Common myeloid progenitor, CD34-positive (primary cell): ENCODE measurements at regions of chr1 and their contacts with region 1.

Region 1: GRCh38 chr1:1122078-1122811 is 6.4 kb upstream of the C1orf159 start:
- DNase-seq: peak; percentile 68 to 79 (median 72)
- H3K4me3 ChIP-seq: peak overlapping the region in 2 of 7 experiments; percentile 48 to 63
- H3K27ac ChIP-seq: no peak overlapping the region
- H3K4me1 ChIP-seq: peaks cover 0 to 23% (median 13%) of the 10 kb centered on the region in 4 experiments
- H3K27me3 ChIP-seq: peaks cover 0 to 27% (median 3%) of the 10 kb centered on the region in 5 experiments

Region 2: DNA sequence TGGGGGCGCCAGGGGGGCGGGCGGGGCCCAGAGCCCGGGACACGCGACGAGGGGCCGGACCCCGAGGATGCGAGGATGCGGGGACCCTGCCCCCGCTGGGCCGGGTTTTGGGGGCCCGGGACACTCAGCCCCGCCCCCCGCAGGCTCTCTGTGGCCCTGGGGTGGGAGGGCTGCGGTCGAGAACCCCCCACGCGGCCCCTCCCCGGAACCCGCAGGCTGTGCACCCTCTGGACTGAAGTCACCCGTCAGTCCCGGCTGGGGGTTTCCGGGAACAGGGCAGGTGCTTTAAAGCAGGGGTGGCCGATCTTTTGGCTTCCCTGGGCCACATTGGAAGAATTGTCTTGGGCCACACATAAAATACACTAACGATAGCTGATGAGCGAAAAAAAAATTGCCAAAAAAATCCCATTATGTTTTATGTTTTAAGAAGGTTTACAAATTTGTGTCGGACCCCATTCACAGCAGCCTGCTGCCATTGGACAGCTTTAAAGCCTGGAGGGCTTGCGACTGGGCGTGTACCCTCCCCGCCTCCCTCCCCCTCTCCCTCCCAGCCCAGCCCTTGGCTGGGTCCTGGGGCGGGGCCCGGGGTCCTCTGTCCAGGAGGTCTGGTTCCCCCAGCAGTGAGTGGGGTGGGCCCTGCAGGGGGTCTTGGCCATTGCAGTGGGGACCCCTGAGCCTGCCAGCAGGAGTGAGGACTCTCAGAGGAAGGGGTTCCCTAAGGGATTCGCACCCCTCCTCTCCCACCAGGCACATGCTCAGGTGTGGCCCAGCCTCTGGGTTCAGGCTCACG is 15.2 kb after region 1 on chr1:
- CTCF ChIA-PET with region 1: interaction called, 13 read pairs
- POLR2A ChIA-PET with region 1: no interaction called
- DNase-seq: peak; percentile 61 to 88 (median 88)
- H3K4me3 ChIP-seq: peak overlapping the region in 3 of 7 experiments; percentile 39 to 62 (median 43)
- H3K27ac ChIP-seq: peak overlapping the region in 1 of 2 experiments; percentile 25
- H3K4me1 ChIP-seq: peaks cover 0 to 29% (median 24%) of the 10 kb centered on the region in 4 experiments
- H3K27me3 ChIP-seq: no peaks in the 10 kb centered on the region

Region 3: DNA sequence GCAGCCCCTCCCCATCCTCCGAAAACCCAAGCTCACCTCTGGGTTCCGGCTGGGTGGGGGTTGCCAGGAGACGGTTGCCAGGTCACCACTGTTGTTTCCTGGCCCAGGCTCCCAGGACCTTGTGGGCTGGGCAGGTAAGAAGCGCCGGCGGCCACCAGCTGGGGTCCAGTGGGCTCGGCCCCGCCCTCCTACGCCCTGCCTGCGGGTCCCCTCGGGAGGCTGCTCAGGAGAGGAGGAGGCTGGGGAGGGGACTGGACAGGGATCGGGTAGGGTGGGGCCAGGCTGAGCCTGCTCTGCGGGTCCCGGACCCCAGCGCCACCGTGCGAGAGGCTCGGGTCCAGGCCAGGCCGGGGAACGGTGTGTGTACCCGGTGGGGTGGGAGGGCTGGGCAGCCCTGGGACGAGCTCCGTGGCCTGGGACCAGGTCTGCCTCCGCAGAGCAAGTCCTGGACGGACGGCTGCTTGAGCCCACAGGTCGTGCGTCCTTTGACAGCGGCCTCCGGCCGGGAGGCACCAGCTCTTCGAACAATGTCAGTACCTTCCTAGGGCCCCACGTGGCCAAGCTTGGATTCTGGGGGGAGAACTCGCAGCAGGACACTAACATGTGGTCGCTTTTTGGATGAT is 51.7 kb after region 1 on chr1 and contains the start of gene TTLL10:
- CTCF ChIA-PET with region 1: interaction called, 12 read pairs
- POLR2A ChIA-PET with region 1: no interaction called
- DNase-seq: peak; percentile 32 to 80 (median 74)
- H3K4me3 ChIP-seq: peak within 1 kb of the TSS in 6 of 7 experiments; percentile 0 to 58 (median 32)
- H3K27ac ChIP-seq: no peak within 1 kb of the TSS
- H3K4me1 ChIP-seq: peaks cover 0 to 45% (median 28%) of the 10 kb centered on the region in 4 experiments
- H3K27me3 ChIP-seq: peaks cover 0 to 50% (median 6%) of the 10 kb centered on the region in 5 experiments

Region 4: DNA sequence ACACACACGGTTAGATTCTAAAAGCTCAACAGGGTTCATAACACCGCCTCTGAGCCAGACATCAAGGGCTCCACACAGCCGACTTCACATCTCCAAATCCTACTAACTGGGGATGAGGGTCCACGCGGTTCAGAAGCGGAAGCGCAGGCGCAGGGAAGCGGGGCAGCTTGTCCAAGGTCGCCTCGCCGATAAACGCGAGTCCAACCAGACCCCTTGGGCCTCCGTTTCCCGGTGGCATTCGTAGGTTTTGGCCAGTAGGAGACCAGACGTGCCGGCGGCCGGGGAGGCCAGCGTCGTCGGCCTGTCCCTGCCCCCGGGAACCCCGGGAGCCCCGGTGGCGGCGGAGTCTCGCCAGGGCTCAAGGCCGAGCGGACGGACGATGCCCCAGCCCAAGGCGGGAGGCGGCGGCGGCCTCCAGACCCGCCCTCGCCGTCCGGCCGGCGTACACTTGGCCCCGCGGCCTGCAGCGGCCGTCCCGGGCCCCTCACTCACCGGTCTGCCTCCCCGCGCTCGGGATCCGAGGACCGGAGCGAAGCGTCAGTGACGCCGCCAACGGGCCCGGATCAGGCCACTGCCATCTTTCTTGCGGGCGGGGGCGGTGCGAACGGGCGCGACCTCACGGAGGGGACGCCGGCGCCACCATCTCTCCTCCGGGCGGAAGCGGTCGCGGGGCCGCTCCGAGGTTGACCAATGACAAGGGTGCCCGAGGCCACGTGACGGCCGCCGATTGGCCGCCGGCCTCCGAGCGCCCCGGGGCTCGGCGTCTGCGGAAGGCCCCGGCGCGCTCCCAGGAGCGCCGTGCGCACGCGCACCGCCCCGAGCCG is 109.4 kb after region 1 on chr1 and contains the start of gene SDF4:
- CTCF ChIA-PET with region 1: interaction called, 13 read pairs
- POLR2A ChIA-PET with region 1: no interaction called
- DNase-seq: peak; percentile 97 to 98 (median 98)
- H3K4me3 ChIP-seq: peak within 1 kb of the TSS; percentile 79 to 97 (median 94)
- H3K27ac ChIP-seq: peak within 1 kb of the TSS; percentile 84 to 92
- H3K4me1 ChIP-seq: peaks cover 4 to 35% (median 33%) of the 10 kb centered on the region in 4 experiments
- H3K27me3 ChIP-seq: no peaks in the 10 kb centered on the region

Region 5: GRCh38 chr1:1250786-1251284 is 128.6 kb after region 1 on chr1:
- CTCF ChIA-PET with region 1: interaction called, 60 read pairs
- POLR2A ChIA-PET with region 1: no interaction called
- DNase-seq: no peak
- H3K4me3 ChIP-seq: no peak overlapping the region
- H3K27ac ChIP-seq: no peak overlapping the region
- H3K4me1 ChIP-seq: peaks cover 0 to 16% (median 10%) of the 10 kb centered on the region in 4 experiments
- H3K27me3 ChIP-seq: peaks cover 0 to 28% (median 6%) of the 10 kb centered on the region in 5 experiments

Region 6: DNA sequence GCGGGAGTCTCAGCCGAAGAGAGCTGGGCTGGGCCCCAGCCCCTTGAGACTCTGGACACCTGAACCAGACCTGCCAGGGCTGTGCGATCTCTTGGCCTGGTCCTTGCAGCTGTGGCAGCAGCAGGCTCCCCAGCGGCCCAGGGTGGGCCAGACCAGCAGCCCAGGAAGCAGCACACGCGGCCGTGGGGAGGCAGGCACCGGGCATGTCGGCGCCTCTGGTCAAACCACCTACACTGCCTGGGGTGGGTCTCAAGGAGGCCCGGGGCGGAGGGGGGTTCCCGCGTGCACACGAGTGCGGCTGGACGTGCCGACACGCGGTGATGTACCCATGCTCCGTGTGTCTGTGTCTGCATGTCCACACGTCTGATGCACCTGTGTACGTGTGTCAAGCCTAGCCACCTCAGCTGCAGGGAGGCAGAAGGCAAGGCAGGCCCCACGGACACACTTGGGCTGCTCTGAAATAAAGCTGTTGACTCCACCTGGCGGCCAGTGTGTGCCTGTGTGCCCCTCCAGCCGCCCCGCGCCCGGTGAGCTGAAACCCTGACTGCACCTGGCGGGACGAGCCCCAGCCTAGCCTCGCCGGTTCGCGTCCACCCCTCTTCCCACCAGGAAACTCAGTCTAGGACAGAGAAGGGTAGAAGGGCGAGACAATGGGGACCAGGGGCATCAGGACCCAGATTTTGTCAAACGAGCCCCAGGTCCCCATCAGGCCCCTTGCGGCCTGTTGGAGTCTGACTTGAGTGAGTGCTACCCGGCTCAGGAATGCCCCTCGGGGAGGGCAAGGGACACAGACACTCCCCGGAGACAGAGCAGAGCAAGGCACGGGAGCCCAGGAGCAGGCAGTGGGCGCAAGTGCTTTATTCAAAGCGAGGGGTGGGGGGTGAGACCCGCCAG is 169.6 kb after region 1 on chr1:
- CTCF ChIA-PET with region 1: interaction called, 16 read pairs
- POLR2A ChIA-PET with region 1: no interaction called
- DNase-seq: peak; percentile 42 to 78 (median 70)
- H3K4me3 ChIP-seq: no peak overlapping the region
- H3K27ac ChIP-seq: no peak overlapping the region
- H3K4me1 ChIP-seq: peaks cover 0 to 3% (median 0%) of the 10 kb centered on the region in 4 experiments
- H3K27me3 ChIP-seq: no peaks in the 10 kb centered on the region